PC-3 (cell line): ENCODE measurements at regions of chr6 and their contacts with region 1.

Region 1: DNA sequence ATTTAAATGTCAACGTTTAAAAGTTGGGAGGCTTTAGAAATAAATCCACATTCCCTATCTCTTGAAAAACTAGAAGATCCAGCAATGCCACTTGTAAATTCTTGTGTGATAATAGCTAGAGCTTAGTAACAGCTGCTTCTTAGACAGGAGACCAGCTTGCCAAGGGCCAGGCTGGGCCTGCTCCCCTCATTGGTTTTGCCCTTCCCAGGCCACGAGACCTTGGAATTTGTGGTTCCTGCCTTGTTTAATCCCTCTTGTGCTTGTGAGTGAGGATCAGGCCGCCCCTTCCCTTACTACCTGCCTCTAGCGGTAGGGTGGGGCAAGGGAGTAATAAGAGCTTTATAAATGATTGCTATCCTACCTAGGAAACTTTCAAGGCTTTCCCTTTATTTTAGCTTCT is 363.5 kb downstream of the SYNE1 start:
- DNase-seq: no peak
- ATAC-seq: no peak
- H3K4me3 ChIP-seq: no peak overlapping the region
- H3K27ac ChIP-seq: no peak overlapping the region
- H3K4me1 ChIP-seq: peaks cover 48% of the 10 kb centered on the region
- H3K27me3 ChIP-seq: no peaks in the 10 kb centered on the region
- CTCF ChIP-seq: no peak

Region 2: GRCh38 chr6:152136453-152136825 is 137.2 kb before region 1 on chr6:
- CTCF ChIA-PET with region 1: no interaction called
- POLR2A ChIA-PET with region 1: no interaction called
- intact Hi-C with region 1: loop called (anchors 2 kb)
- DNase-seq: peak; percentile 85
- ATAC-seq: peak; percentile 98
- H3K4me3 ChIP-seq: peak overlapping the region; percentile 18; the same call in 1 of the 2 replicates
- H3K27ac ChIP-seq: peak overlapping the region; percentile 86
- H3K4me1 ChIP-seq: peaks cover 14% of the 10 kb centered on the region
- H3K27me3 ChIP-seq: no peaks in the 10 kb centered on the region
- CTCF ChIP-seq: peak; percentile 41; the same call in 1 of the 2 replicates

Region 3: GRCh38 chr6:152206072-152206818 is 67.4 kb before region 1 on chr6:
- CTCF ChIA-PET with region 1: no interaction called
- POLR2A ChIA-PET with region 1: interaction called, 11 read pairs
- intact Hi-C with region 1: loop called (anchors 5 kb)
- DNase-seq: peak; percentile 9
- ATAC-seq: no peak
- H3K4me3 ChIP-seq: no peak overlapping the region
- H3K27ac ChIP-seq: no peak overlapping the region
- H3K4me1 ChIP-seq: peaks cover 22% of the 10 kb centered on the region
- H3K27me3 ChIP-seq: no peaks in the 10 kb centered on the region
- CTCF ChIP-seq: peak; percentile 59

Region 4: GRCh38 chr6:152244998-152245630 is 28.5 kb before region 1 on chr6:
- CTCF ChIA-PET with region 1: no interaction called
- POLR2A ChIA-PET with region 1: no interaction called
- intact Hi-C with region 1: no loop called
- DNase-seq: no peak
- ATAC-seq: no peak
- H3K4me3 ChIP-seq: no peak overlapping the region
- H3K27ac ChIP-seq: no peak overlapping the region
- H3K4me1 ChIP-seq: no peaks in the 10 kb centered on the region
- H3K27me3 ChIP-seq: no peaks in the 10 kb centered on the region
- CTCF ChIP-seq: no peak